Posterior cingulate gyrus (tissue), 11 donors: ENCODE measurements at regions of chr3 and their contacts with region 1.

Region 1: GRCh38 chr3:130892759-130893375 is 1.0 kb upstream of the ATP2C1 start:
- DNase-seq: peak in 6 of 10 donors; percentile 44 to 85 (median 66)

Region 2: DNA sequence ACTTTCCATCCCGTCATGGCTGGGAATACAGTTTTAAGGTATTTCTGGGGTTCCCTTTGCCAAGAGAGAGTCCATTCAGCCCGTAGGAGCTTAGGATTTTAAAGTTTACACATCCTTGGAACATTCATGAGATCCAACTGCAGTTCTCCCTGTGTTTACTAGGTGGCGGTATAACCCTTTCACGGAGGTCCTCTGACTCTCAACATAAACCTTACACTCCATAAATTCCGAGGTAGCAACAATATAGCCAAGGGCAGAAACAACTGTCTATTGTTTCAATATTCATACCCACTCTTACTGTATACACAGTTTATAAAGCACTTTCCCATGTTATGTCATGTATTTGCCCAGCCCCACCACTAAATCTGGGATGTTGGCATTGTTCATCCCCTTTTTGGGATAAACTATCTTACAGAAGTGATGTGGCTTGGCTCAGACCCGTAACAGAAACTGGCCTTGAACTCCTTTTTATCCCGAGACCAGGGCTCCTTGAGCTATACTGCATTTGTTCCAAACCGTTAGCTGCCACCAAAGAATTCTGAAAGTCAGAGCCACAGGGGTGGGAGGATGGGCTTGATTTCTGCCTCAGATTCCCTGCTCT is 616.6 kb before region 1 on chr3:
- intact Hi-C with region 1: loop called (anchors 10 kb)
- DNase-seq: peak in 1 of 10 donors; percentile 16

Region 3: DNA sequence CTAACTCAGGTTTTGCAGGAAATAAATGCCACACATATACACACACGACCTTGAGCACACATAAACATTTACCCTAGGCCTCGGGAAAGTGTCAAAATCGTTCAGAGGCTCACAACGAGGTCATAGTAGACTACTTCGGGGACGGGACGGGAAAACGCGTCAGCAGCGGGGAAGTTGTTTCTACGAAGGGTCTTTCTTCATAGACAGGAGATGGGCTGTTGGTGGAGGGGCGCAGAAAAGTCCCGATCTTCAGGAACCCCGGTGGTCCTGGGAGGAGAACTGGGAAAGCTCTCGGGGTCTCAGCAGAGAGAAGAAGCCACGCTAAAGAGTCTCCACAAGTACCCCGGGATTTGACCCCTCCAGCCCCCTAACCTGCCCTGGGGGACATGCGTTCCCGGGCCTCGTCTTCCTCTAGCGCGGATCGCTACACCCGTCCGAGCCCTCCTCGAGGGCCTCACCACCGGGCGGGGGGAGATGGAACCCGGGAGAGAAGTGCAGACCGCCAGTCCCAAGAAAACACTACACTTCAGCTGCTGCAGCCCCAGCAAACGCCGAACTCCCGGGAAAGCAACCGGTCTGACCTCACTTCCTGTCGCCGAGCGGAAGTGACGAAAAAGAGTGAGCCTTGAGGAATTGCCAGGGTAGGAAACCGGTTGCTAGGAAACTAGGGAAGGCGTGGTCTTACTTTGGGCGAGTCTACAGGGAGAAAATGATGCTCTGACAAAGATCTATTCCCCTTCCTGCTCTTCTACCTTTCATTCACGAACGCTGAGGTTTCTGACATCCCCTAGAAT is 146.4 kb before region 1 on chr3 and contains the start of gene PIK3R4:
- intact Hi-C with region 1: loop called (anchors 2 kb)
- DNase-seq: peak; percentile 93 to 99 (median 97)

Region 4: GRCh38 chr3:130759699-130760338 is 133.0 kb before region 1 on chr3:
- intact Hi-C with region 1: loop called (anchors 1 kb)
- DNase-seq: peak in 6 of 10 donors; percentile 14 to 83 (median 32)

Region 5: DNA sequence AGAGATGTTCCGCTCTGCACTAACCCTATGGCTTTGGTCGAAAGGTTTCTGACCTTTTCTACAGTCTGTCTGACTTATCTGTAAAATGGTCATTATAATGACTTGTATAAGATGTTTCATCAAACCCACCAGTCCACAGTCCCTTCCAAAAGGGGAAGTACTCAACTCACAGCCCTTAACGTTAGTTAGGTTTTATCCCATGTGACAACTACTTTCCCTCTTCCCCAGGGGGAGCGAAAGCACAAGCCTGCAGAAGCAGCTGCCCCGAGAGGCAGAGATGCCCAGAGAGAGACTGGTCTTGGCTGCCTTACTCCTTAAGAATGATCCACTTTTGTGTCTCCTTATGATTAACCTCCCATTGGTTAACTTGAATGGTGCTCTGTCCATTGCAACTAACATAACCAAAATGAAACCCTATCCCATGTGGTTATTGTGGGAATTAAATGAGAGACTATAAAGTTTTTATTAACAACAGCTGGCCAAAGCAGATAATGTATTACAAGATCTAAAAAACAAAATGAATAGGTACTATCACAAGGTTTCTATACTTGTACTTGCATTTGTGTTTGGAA is 127.3 kb after region 1 on chr3:
- intact Hi-C with region 1: loop called (anchors 5 kb)
- DNase-seq: no peak

Region 6: DNA sequence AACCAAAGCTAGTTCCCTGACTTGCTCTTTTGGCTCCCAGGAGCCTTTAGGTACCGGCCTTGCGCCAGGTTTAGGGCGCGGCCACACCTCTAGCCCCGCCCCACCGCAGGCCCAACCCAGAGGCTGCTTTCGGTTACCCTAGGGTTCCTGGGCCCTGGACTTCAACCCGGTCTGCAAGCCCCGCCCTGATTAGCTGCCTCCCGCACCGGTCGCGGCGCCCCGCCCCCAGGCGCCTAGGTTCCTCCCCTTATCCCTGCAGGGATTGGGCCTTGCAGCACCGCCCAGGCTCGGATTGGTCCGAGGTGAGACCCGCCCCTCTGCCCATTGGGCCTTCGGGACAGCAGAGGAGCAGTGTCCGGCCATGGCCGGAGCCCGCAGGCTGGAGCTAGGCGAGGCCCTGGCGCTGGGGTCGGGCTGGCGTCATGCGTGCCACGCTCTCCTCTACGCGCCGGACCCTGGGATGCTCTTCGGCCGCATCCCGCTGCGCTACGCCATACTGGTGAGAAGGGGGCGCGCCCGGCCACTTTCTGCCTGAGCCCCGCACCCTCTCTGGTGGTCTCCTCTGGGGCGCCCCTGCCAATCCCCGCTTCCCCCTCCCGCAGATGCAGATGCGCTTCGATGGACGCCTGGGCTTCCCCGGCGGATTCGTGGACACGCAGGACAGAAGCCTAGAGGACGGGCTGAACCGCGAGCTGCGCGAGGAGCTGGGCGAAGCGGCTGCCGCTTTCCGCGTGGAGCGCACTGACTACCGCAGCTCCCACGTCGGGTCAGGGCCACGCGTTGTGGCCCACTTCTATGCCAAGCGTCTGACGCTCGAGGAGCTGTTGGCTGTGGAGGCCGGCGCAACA is 488.8 kb after region 1 on chr3 and contains the start of gene NUDT16:
- intact Hi-C with region 1: loop called (anchors 10 kb)
- DNase-seq: peak; percentile 97 to 100 (median 98)